Psoas muscle (tissue), 8 donors: ENCODE measurements at regions of chr19 and their contacts with region 1.

Region 1: GRCh38 chr19:38142176-38143035 is 81.6 kb downstream of the DPF1 start:
- DNase-seq: peak; percentile 67 to 84
- ATAC-seq: peak; percentile 85 to 88 (median 85)
- H3K4me3 ChIP-seq: no peak overlapping the region
- H3K27ac ChIP-seq: no peak overlapping the region
- H3K4me1 ChIP-seq: no peaks in the 10 kb centered on the region
- H3K27me3 ChIP-seq: no peaks in the 10 kb centered on the region
- CTCF ChIP-seq: peak; percentile 69

Region 2: DNA sequence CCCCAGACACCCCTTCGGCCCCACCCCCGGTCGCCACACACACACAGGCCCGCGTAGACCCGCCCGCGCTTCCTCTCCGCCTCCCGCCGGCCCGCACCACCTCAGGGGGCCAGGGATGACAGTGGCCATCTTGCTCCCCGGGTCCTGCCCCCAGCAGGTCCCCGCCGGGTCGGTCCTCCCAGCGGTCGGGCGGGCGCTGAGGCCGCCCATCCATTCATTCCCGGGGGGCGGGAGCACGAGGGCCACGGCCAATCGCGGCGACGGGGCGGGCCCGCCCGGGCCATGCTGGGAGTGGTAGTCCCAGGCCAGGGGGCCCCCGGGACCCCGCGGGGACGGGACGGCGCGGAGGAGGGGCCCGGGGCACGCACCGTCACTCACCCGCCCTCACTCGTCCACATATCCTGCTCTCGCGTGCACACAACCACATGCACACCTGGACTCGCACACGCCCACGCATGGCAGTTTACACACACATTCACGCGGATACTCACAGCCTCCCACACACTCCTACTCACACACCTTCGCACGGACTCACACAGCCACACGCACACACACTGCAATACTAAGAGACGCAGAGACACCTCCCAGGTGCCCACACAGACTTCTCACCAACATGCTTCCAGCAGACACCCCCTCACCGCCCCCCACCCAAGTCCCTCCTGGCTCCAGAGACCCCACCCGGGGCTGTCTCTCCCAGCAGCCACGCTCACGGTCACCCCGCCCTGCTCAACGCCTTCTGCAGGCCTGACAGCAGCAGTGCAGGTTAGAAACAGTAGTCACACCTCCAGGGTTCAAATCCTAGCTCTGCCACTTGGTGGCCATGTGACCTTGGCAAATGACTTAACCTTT is 81.8 kb after region 1 on chr19 and contains the start of gene DPF1:
- intact Hi-C with region 1: loop called (anchors 5 to 10 kb)
- DNase-seq: peak in 1 of 2 donors; percentile 39
- ATAC-seq: peak; percentile 65 to 84 (median 74)
- H3K4me3 ChIP-seq: peak within 1 kb of the TSS; percentile 61
- H3K27ac ChIP-seq: no peak within 1 kb of the TSS
- H3K4me1 ChIP-seq: peaks cover 4% of the 10 kb centered on the region
- H3K27me3 ChIP-seq: peaks cover 0 to 87% (median 18%) of the 10 kb centered on the region in 3 donors
- CTCF ChIP-seq: no peak
- total RNA-seq, gene DPF1: not detected

Region 3: GRCh38 chr19:38229585-38230073 is 87.2 kb after region 1 on chr19:
- intact Hi-C with region 1: loop called (anchors 5 to 10 kb)
- DNase-seq: peak; percentile 43 to 69
- ATAC-seq: peak; percentile 58 to 85 (median 74)
- H3K4me3 ChIP-seq: no peak overlapping the region
- H3K27ac ChIP-seq: no peak overlapping the region
- H3K4me1 ChIP-seq: peaks cover 4% of the 10 kb centered on the region
- H3K27me3 ChIP-seq: peaks cover 0 to 75% (median 17%) of the 10 kb centered on the region in 3 donors
- CTCF ChIP-seq: no peak